WTC11 (cell line): ENCODE measurements at regions of chr2 and their contacts with region 1.

Region 1: GRCh38 chr2:44955593-44956392 is 14.3 kb downstream of the SIX3 start:
- DNase-seq: peak; percentile 90
- ATAC-seq: peak; percentile 65
- H3K4me3 Mint-ChIP-seq: peak overlapping the region; percentile 67
- H3K27ac Mint-ChIP-seq: no peak overlapping the region
- H3K4me1 Mint-ChIP-seq: peaks cover 45% of the 10 kb centered on the region
- H3K27me3 Mint-ChIP-seq: peaks cover 70% of the 10 kb centered on the region
- CTCF ChIP-seq: peak; percentile 71

Region 2: GRCh38 chr2:44928483-44929158 is 27.2 kb before region 1 on chr2:
- CTCF ChIA-PET with region 1: interaction called, 16 read pairs
- POLR2A ChIA-PET with region 1: no interaction called
- DNase-seq: peak; percentile 58
- ATAC-seq: peak; percentile 8
- H3K4me3 Mint-ChIP-seq: peak overlapping the region; percentile 64
- H3K27ac Mint-ChIP-seq: no peak overlapping the region
- H3K4me1 Mint-ChIP-seq: peaks cover 71% of the 10 kb centered on the region
- H3K27me3 Mint-ChIP-seq: peaks cover 95% of the 10 kb centered on the region
- CTCF ChIP-seq: no peak

Region 3: DNA sequence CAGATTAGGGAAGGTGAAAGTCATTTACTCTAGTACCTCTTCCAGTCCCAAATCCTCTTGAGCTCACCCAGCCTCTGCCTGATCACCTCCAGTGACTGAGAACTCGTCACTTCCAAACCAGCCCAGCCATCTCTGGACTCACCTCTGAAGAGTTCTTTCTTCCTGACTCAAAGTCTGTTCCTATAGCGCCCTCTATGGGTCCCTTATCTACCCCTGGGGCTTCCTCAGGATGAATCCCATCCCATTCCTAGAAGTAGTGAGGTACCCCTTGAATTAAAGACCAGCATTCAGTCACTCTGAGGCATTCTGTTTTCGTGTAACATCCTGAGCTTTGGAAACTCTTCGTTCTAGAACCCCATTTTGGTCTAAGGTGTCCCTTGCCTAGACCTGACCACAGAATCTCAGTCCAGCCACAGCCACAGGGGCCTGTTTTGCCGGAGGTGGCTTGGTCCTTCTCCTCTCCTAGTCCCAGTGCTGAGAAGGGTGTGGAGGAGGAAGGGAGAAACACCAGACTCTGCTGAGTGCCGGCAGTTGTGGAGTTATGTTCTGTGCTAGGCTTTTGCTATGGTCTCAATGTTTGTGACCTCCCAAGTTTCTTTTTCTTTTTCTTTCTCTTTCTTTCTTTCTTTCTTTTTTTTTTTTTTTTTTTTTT is 18.4 kb after region 1 on chr2:
- CTCF ChIA-PET with region 1: interaction called, 65 read pairs
- POLR2A ChIA-PET with region 1: no interaction called
- DNase-seq: peak; percentile 71
- ATAC-seq: peak; percentile 78
- H3K4me3 Mint-ChIP-seq: no peak overlapping the region
- H3K27ac Mint-ChIP-seq: no peak overlapping the region
- H3K4me1 Mint-ChIP-seq: peaks cover 32% of the 10 kb centered on the region
- H3K27me3 Mint-ChIP-seq: peaks cover 6% of the 10 kb centered on the region; the same call in 1 of the 2 replicates
- CTCF ChIP-seq: peak; percentile 64

Region 4: GRCh38 chr2:45000921-45001868 is 45.4 kb after region 1 on chr2:
- CTCF ChIA-PET with region 1: interaction called, 30 read pairs
- POLR2A ChIA-PET with region 1: no interaction called
- DNase-seq: peak; percentile 49
- ATAC-seq: peak; percentile 12
- H3K4me3 Mint-ChIP-seq: peak overlapping the region; percentile 69
- H3K27ac Mint-ChIP-seq: no peak overlapping the region
- H3K4me1 Mint-ChIP-seq: peaks cover 36% of the 10 kb centered on the region
- H3K27me3 Mint-ChIP-seq: peaks cover 100% of the 10 kb centered on the region
- CTCF ChIP-seq: no peak